Activated CD4-positive, alpha-beta T cell treated with anti-CD3 and anti-CD28 coated beads, Interleukin-2, amount 10 ng/mL, durations not matched to agents 24 days and 14 days (primary cell): ENCODE measurements at regions of chr4 and their contacts with region 1.

Region 1: DNA sequence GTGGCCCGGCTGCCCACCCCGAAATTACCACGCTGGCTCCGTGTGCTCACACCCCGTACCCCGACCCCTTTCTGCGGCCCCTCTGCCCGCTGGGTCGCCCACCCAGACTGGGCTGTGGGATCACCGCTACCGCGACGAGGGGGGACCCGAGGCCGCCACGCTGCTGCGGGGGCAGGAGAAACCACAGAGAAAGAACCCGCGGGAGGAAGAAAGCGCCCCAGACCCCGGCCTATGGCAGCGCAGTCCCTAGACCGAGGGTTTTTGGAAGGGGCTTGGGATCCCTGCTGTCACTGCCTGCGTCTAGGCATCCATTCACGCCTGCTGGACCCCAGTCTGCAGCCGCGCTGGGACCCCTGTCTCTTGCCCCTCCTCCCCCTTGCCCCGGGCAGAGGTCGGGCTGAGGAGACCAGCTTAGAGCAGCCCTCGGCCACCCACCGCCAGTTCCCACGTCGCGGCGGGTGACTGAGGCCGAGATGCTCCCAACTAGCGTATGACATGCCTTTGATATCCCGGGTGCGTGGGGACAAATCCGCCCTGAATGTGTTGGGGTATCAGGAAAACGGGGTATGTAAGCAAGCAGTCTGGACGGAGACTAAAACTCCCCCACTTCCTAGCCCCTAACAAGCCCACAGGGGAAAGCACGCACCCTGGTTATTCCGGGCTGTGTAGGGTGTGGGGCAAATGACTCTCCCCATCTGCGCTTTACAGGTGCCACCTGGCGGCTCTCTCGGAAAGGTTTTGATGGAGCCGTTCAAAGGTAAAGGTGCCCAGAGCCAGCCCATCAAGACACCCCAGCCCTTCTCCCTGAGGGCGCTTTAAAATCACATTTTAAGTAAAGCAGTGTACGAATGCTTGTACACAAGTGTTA is 862 bp upstream of the INPP4B start:
- DNase-seq: peak; percentile 92
- H3K4me3 Mint-ChIP-seq: peak overlapping the region; percentile 95
- H3K27ac Mint-ChIP-seq: peak overlapping the region; percentile 89
- H3K4me1 Mint-ChIP-seq: peaks cover 18% of the 10 kb centered on the region
- H3K27me3 Mint-ChIP-seq: peaks cover 22% of the 10 kb centered on the region

Region 2: GRCh38 chr4:142126890-142127497 is 720.0 kb before region 1 on chr4:
- intact Hi-C with region 1: loop called (anchors 1 kb)
- DNase-seq: peak; percentile 88
- H3K4me3 Mint-ChIP-seq: no peak overlapping the region
- H3K27ac Mint-ChIP-seq: no peak overlapping the region
- H3K4me1 Mint-ChIP-seq: peaks cover 12% of the 10 kb centered on the region
- H3K27me3 Mint-ChIP-seq: no peaks in the 10 kb centered on the region

Region 3: DNA sequence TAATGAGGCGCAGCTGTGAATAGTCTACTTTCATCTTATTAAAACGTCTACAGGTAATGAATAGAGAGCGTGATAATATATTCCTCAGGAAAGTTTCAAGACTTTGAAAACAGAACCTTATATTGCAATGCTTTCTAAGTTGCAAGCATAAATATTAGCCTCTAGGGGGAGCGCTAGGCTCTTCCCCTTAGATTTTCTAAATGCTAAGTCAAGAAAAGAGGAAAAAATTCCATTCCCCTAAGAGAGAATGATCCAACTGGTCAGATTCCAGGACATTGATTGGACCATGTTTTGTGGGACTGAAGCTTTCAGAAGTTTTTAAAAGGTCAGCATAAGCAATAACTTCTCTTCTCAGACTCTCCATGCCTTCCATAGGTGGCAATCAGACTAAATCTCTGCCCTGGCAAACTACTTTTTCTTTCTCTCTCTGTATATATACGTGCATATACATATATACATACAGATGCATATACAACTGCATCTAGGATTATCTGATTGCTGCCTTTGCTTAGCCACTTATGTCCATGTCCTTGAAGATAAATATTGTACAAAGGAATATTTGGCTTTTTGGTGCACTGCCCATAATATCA is 493.7 kb before region 1 on chr4:
- intact Hi-C with region 1: loop called (anchors 2 kb)
- DNase-seq: peak; percentile 73
- H3K4me3 Mint-ChIP-seq: peak overlapping the region; percentile 69
- H3K27ac Mint-ChIP-seq: peak overlapping the region; percentile 71
- H3K4me1 Mint-ChIP-seq: peaks cover 82% of the 10 kb centered on the region
- H3K27me3 Mint-ChIP-seq: no peaks in the 10 kb centered on the region

Region 4: DNA sequence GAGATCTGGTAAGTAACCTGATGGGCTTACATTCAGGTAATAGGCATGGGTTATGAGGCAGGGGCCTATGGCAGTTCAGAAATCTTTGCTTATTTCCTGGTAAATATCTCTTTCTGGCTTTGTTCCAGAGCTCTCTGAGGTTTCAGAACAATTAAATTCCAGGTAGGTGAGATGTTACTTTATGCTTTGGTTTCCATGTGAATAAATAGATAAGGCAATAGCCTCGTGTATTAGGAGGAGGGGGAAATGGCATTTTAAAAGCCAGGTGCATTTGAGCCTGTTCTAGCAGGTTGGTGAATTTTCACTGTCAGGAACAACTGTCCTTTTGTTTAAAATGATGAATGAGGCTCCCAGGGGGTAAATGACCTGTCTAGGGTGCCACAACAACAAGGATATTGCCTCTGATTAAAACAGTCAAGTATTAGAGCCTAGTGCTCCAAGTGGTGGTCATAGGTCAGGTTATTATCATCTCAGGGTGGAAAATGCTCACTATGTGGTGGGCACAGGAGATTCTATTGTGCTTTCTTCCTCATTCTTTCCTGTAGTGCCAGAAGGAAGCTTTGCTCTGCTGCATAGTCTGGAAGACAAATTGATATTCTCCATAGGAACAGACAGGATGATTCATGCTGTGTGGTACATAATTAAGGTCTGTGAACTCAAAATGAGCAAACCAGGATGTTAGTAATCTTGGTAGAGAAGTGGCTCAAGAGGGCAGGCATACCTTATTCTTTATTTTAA is 297.1 kb before region 1 on chr4:
- intact Hi-C with region 1: loop called (anchors 2 kb)
- DNase-seq: no peak
- H3K4me3 Mint-ChIP-seq: no peak overlapping the region
- H3K27ac Mint-ChIP-seq: peak overlapping the region; percentile 57
- H3K4me1 Mint-ChIP-seq: peaks cover 44% of the 10 kb centered on the region
- H3K27me3 Mint-ChIP-seq: no peaks in the 10 kb centered on the region

Region 5: DNA sequence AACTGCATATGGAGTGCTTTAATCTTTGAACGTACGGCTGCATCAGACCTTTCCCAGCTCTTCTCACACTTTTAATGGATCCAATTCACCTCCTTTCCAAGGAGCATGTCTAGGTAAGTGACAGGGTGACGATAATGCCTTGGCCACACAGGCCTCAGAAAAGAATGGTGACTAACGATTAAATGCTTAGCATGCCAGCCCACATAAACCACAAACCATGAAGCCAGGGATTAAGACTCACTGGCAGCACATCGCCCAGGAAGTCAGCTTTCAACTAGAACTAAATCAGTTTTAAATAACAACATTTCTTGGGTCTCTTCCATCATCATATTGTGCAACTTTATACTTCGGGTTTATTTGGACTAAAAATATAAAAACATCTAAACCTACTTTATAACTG is 29.5 kb before region 1 on chr4:
- intact Hi-C with region 1: loop called (anchors 2 kb)
- DNase-seq: peak; percentile 77
- H3K4me3 Mint-ChIP-seq: peak overlapping the region; percentile 25
- H3K27ac Mint-ChIP-seq: peak overlapping the region; percentile 78
- H3K4me1 Mint-ChIP-seq: peaks cover 21% of the 10 kb centered on the region
- H3K27me3 Mint-ChIP-seq: no peaks in the 10 kb centered on the region

Region 6: DNA sequence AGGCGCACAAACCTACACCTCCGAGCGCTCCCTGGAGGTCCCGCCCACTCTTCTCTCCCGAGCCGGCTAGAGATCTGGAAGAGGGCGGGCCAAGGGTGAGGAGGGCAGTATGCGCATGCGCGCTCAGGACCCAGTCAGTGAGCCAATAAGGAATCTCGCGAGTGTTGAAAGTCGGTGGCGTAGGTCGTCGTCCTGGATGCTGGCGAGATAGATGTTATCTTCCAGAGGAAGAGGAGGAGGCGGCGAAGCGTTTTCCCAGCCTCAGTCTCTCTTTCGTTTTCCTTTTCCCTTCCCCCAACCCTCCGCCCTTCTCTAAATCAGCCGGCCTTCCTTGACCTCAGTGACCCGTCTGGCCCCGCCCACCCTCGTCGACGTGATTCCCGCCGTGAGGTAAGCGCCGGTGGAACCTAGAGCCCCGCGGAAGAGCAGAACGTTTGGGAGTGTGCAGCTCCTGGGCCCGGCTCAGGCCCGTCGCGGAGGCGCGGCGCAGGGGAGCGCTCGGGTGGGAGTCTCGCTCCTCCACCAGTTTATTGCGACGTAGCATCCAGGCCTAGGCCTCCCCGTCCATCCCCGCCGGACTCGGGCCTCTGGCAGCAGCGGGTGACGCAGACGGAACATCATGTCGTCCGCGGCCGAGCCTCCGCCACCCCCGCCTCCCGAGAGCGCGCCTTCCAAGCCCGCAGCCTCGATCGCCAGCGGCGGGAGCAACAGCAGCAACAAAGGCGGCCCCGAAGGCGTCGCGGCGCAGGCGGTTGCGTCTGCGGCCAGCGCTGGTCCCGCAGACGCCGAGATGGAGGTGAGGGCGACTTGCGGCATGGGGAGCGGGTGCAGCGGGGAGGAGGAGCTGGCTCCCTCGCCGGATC is 666.6 kb after region 1 on chr4 and contains the start of gene SMARCA5:
- intact Hi-C with region 1: loop called (anchors 10 kb)
- DNase-seq: peak; percentile 98
- H3K4me3 Mint-ChIP-seq: peak within 1 kb of the TSS; percentile 100
- H3K27ac Mint-ChIP-seq: peak within 1 kb of the TSS; percentile 97
- H3K4me1 Mint-ChIP-seq: peaks cover 25% of the 10 kb centered on the region
- H3K27me3 Mint-ChIP-seq: peaks cover 14% of the 10 kb centered on the region
- total RNA-seq, gene SMARCA5: 59.0 and 60.6 TPM in 2 replicates

Region 7: DNA sequence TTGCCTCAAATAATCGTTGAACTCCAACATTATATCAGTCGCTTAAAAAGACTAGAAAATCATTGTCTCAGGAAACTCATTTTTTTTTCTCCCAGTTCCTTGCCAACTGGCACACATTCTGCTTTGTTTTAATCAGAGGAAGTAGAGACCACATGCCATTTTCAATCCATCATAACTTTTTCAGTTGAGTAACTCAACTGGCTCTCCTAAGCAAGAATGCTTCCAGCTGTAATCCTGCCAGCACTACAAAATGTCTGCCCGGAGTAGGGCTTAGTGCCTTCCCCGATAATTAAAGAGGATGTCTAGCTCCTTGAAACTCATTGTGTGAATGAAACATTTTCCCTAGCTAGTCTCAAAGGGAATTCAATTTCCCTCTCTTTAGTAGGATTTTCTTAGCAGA is 820.5 kb after region 1 on chr4:
- intact Hi-C with region 1: no loop called
- DNase-seq: no peak
- H3K4me3 Mint-ChIP-seq: no peak overlapping the region
- H3K27ac Mint-ChIP-seq: no peak overlapping the region
- H3K4me1 Mint-ChIP-seq: no peaks in the 10 kb centered on the region
- H3K27me3 Mint-ChIP-seq: no peaks in the 10 kb centered on the region